ENCODE measurements at regions of chr1 and their contacts with region 1.

Region 1: GRCh38 chr1:167066333-167067122 is 23.6 kb downstream of the GPA33 start:
- DNase-seq: peak; percentile 87

Region 2: GRCh38 chr1:167105271-167106118 is 39.0 kb after region 1 on chr1:
- intact Hi-C with region 1: loop called (anchors 5 kb)
- DNase-seq: no peak

Region 3: DNA sequence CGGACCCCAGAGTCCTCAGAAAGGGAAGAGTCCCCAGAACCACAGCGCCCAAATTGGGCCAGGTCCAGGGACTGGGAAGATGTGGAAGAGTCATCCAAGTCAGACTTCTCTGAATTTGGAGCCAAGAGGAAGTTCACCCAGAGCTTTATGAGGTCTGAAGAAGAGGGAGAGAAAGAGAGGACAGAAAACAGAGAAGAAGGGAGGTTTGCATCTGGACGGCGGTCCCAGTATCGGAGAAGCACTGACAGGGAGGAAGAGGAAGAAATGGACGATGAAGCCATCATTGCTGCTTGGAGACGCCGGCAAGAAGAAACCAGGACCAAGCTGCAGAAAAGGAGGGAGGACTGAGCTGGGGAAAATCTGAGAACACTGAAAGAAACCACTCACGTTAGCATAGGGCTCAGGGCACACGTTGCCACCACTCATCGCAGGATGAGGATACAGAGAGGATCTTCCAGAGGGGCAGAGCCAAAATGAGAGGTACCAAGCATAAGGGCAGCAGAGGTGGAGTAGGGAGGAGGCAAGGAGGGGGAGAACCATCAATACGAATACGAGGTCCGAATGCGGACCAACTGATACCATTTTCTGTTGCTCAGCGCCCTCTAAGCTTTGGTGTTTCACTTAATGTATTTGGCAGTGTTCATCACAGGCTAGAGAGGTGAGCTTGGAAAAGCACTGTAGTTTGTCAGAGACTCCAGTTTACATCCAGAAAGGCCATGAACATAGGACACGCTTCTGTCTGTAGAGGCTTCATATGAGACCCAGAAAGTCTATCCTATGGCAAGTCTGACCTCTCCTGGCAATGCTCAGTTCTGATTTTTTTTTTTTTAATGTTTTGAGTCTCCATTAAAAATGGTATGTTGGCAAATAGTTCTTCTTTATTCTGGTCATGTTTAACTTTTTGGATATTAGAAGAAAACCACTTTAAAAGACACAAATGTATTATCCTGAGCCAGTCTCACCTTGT is 62.0 kb after region 1 on chr1:
- intact Hi-C with region 1: loop called (anchors 5 kb)
- DNase-seq: no peak

Region 4: DNA sequence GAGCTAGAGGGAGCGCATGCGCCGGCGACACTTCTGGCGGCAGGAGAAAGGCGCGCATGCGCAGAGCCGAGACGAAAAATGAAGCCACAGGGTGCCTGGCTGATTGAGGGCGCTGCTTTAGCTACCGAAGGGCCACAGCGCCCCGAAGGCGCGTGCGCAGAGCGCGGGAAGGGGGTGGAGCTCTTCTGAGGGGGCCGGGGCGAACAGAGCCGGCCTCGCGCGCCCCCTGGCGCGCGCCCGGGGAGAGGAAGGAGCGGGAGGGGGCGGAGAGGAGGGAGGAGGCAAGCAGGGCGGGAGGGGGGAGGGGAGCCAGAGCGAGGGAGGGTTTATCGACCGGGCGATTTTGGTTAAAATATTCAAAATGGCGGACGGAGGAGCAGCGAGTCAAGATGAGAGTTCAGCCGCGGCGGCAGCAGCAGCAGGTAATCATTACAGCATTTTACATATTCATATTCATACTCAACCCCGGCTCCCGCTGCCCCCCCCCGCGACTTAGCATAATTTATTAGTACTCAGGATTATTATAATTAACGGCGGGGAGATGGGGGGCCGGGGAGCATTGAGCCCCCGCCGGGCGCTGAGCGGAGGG is 154.1 kb after region 1 on chr1 and contains the start of gene POU2F1:
- intact Hi-C with region 1: loop called (anchors 2 kb)
- DNase-seq: peak; percentile 100
- total RNA-seq, gene POU2F1: 9.9 TPM

Region 5: DNA sequence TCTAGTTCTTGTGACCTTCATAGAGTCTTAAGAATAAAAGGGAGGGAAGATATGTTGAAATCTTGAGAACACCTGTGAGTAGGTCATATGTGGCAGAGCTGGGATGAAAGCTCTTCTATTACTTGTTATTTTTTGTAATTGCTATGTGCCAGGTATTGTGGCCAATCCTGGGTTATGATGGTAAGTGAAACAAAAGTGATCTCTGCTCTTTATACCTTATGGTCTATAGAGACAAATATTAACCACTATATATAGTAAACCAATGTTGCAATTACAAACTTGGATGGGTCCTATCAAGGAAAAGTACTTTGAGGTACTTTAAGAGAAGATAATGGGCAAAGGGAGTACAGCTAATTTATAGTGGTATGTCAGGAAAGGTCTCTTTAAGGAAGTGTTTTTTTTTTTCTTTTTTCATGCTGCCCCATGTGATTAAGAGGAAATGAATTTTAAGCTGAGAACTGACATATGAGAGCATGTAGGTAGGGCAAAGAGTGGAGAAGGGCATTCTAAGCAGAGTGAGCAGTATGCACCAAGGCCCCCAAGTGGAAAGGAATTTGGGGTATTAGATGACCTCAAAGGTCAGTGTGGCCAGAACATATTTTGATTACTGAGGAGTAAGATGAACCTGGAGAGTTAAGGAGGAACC is 197.4 kb after region 1 on chr1:
- intact Hi-C with region 1: loop called (anchors 5 kb)
- DNase-seq: no peak

Region 6: GRCh38 chr1:167442124-167442848 is 375.8 kb after region 1 on chr1:
- intact Hi-C with region 1: loop called (anchors 2 kb)
- DNase-seq: peak; percentile 89

Region 7: DNA sequence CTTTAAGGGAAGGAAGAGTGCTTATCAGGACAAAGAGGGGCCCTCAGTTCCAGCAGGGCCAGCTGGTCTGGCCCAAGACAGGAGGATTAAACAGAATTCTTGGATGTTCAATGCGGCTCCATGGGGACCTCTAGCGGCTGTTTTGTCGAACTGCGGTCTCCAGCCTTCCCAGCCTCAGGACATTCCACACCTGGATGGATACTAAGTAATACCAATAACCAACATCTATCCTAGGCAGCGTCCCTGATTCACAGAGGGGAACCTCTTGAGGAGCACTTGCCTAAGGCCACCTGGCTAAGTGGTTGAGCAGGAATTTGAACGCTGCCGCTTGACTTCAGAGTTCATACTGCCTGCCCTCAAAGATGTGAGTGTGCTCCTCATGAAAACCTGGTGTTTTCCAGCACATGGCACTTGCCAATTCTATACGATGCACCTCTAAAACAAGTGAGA is 467.3 kb after region 1 on chr1:
- intact Hi-C with region 1: loop called (anchors 5 kb)
- DNase-seq: peak; percentile 83